Activated CD4-positive, alpha-beta memory T cell treated with anti-CD3 and anti-CD28 coated beads, Interleukin-2, amount 10 ng/mL, durations not matched to agents 7 days and 5 days (primary cell): ENCODE measurements at regions of chr11 and their contacts with region 1.

Region 1: DNA sequence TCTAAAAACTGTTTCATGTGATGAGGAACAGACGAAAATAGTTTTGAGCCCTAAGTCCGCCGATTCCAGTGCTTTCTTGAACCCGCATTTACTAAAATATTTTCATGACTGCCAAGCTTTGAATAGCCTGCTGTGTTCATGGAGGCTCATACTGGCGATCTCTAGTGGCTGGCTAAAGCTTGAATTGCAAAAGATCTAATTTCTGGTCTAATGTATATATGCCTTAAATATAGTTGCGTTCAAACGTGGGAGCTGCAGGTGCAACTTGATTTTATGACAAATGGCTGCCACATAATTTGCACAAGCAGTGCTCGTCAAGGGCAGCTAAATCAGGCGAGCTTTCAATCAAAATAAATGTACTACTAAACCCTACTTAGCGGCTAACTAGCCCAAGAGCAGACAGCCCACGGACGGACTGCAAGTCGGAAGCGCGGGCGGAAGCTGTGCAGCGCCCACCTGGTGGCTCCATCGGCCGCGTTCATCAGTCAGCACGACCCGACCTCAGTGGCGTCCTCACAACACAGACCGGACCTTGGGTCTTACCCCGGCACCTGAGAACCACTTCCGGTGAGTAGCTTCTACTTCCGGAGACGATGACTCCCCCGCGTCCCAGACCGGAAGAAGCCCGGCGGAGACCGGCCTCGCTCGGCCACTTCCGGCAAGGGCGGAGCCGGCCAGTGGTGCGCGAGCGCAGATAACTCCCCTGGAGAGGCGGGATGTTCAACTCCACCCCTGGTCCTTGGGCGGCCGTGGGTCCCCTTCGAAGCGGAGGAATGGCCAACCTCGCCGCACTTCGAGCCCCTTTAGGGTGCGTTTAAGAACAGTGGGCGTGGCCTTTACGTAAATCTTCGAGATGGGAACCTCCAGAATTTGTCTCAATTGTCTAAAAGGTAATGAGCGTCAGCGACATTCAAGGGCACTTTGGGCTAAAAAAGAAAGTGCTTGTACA is 6.1 kb downstream of the RPL27A start:
- DNase-seq: peak; percentile 91
- H3K4me3 Mint-ChIP-seq: peak overlapping the region; percentile 96
- H3K27ac Mint-ChIP-seq: peak overlapping the region; percentile 94
- H3K4me1 Mint-ChIP-seq: peaks cover 70% of the 10 kb centered on the region
- H3K27me3 Mint-ChIP-seq: no peaks in the 10 kb centered on the region

Region 2: DNA sequence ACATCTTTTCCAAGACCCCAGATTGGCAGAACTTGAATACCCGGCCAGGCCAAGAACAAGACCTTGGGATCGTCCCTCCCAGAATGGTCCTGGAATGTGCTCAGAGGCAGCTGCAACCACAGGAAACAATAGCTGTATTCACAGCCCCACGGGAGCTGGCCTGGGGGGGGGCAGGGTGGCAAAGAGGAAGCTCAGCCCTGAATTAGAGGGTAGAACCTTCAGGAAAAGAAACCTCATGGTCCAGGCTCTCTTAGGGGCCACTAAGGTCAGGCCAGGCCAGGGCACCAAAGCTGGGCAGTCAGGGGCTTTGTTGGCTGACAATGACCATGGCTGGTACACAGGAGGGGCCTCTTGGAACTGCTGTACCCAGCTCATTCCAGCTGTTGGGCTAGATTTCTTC is 11.2 kb after region 1 on chr11:
- CTCF ChIA-PET with region 1: no interaction called
- POLR2A ChIA-PET with region 1: interaction called, 34 read pairs
- DNase-seq: no peak
- H3K4me3 Mint-ChIP-seq: no peak overlapping the region
- H3K27ac Mint-ChIP-seq: no peak overlapping the region
- H3K4me1 Mint-ChIP-seq: peaks cover 4% of the 10 kb centered on the region
- H3K27me3 Mint-ChIP-seq: no peaks in the 10 kb centered on the region